ENCODE measurements at regions of chr10 and their contacts with region 1.

Region 1: DNA sequence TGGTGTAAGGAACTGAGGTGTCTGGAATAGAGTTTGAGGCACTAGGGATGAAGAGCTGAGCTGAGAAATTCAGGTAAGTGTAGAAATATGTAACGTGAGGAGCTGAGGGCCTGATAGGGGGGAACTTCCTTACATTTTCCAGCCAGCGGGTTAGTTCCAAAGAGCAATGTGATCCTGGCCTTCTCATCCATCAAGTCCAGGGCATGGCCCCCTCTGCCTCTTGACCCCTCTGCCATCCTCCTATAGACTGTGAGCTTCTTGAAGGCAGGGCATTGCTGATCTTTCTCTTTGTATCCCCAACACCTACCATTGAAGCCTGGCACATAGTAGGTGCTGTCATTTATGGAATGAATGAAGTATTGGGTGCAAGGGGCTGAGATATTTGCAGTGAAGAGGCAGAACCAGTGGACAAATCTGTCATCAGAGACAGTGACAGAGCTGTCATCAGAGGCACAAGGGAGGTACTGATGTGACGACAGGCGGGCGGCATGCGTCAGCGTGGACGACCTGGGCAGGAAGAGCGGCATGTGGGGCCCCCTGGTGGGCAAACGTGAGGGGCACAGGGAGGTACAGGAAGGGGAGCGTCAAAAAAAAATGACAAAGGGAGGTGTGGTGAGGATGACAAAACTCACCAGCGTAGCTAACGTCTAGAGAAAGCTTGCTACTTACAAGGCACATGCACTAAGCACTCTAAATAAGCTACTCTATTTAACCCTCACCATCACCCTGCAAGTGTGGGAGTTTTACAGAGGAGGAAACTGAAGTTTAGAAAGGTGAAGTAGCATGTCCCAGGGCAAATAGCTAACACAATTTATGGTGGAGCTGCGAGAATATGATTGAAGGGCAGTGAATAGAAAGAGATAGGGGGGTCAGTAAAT is 5.2 kb upstream of the CAMK2G start:
- DNase-seq: no peak
- ATAC-seq: peak; percentile 94
- H3K4me3 ChIP-seq: no peak overlapping the region
- H3K27ac ChIP-seq: no peak overlapping the region
- H3K4me1 ChIP-seq: peaks cover 11% of the 10 kb centered on the region
- H3K27me3 ChIP-seq: no peaks in the 10 kb centered on the region
- CTCF ChIP-seq: peak; percentile 95 to 99 (median 97)
- EP300 ChIP-seq: peak in 1 of 2 experiments; percentile 48; a peak in 2 of 4 replicates
- POLR2A ChIP-seq: no peak
- RAD21 ChIP-seq: peak; percentile 91

Region 2: GRCh38 chr10:73159038-73159648 is 720.4 kb before region 1 on chr10:
- CTCF ChIA-PET with region 1: no interaction called
- POLR2A ChIA-PET with region 1: no interaction called
- RAD21 ChIA-PET with region 1: no interaction called
- SMC1A ChIA-PET with region 1: no interaction called
- in situ Hi-C with region 1: no loop called
- intact Hi-C with region 1: no loop called
- DNase-seq: peak; percentile 30
- ATAC-seq: peak; percentile 53; the same call in 2 of the 3 replicates
- H3K4me3 ChIP-seq: no peak overlapping the region
- H3K27ac ChIP-seq: no peak overlapping the region
- H3K4me1 ChIP-seq: no peaks in the 10 kb centered on the region
- H3K27me3 ChIP-seq: no peaks in the 10 kb centered on the region
- CTCF ChIP-seq: peak; percentile 62 to 81 (median 64)
- EP300 ChIP-seq: no peak
- POLR2A ChIP-seq: no peak
- RAD21 ChIP-seq: peak; percentile 73

Region 3: GRCh38 chr10:73232887-73233286 is 646.6 kb before region 1 on chr10:
- CTCF ChIA-PET with region 1: no interaction called
- POLR2A ChIA-PET with region 1: no interaction called
- RAD21 ChIA-PET with region 1: no interaction called
- SMC1A ChIA-PET with region 1: no interaction called
- in situ Hi-C with region 1: no loop called
- intact Hi-C with region 1: no loop called
- DNase-seq: no peak
- ATAC-seq: no peak
- H3K4me3 ChIP-seq: no peak overlapping the region
- H3K27ac ChIP-seq: no peak overlapping the region
- H3K4me1 ChIP-seq: no peaks in the 10 kb centered on the region
- H3K27me3 ChIP-seq: no peaks in the 10 kb centered on the region
- CTCF ChIP-seq: peak in 2 of 3 experiments; percentile 5 to 24; a peak in 1 of 6 replicates
- EP300 ChIP-seq: no peak
- POLR2A ChIP-seq: no peak
- RAD21 ChIP-seq: peak; percentile 28

Region 4: GRCh38 chr10:73332221-73332778 is 547.2 kb before region 1 on chr10:
- CTCF ChIA-PET with region 1: no interaction called
- POLR2A ChIA-PET with region 1: no interaction called
- RAD21 ChIA-PET with region 1: no interaction called
- SMC1A ChIA-PET with region 1: no interaction called
- in situ Hi-C with region 1: no loop called
- intact Hi-C with region 1: no loop called
- DNase-seq: no peak
- ATAC-seq: no peak
- H3K4me3 ChIP-seq: no peak overlapping the region
- H3K27ac ChIP-seq: no peak overlapping the region
- H3K4me1 ChIP-seq: no peaks in the 10 kb centered on the region
- H3K27me3 ChIP-seq: no peaks in the 10 kb centered on the region
- CTCF ChIP-seq: no peak
- EP300 ChIP-seq: no peak
- POLR2A ChIP-seq: no peak
- RAD21 ChIP-seq: no peak

Region 5: DNA sequence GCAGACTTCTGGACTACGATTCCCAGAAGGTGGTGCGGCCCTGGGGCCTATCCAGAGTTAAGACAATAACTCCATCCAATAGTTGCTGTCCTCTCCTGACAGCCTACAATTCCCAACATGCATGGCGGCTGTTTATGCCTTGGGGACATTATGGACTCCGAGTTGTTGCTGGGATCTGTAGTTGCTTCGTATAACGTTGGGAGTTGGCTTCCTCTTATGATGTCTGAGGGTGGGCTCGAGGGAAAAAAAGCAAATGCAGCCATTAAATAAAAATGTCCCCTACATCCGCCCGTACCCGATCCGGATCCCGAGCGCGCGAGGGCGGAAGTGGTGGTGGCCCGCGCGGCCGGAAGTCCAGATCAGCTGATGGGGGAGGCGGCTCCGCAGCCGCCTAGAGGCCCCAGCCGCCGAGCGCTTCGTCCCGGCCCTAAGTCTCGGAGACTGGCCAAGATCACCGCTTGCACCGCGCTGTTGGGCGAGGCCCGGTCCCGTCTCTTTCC is 94.3 kb before region 1 on chr10 and contains the start of gene ZSWIM8:
- CTCF ChIA-PET with region 1: interaction called, 6 read pairs
- POLR2A ChIA-PET with region 1: interaction called, 3 read pairs
- RAD21 ChIA-PET with region 1: interaction called, 10 read pairs
- SMC1A ChIA-PET with region 1: interaction called, 4 read pairs
- in situ Hi-C with region 1: no loop called
- intact Hi-C with region 1: no loop called
- DNase-seq: peak; percentile 84
- ATAC-seq: peak; percentile 89
- H3K4me3 ChIP-seq: peak within 1 kb of the TSS; percentile 91
- H3K27ac ChIP-seq: peak within 1 kb of the TSS; percentile 85
- H3K4me1 ChIP-seq: peaks cover 10% of the 10 kb centered on the region
- H3K27me3 ChIP-seq: no peaks in the 10 kb centered on the region
- CTCF ChIP-seq: no peak
- EP300 ChIP-seq: no peak
- POLR2A ChIP-seq: peak; percentile 86
- RAD21 ChIP-seq: no peak
- polyA plus RNA-seq, gene ZSWIM8: 7.8 to 8.5 TPM

Region 6: GRCh38 chr10:73857446-73857845 is 22.1 kb before region 1 on chr10:
- CTCF ChIA-PET with region 1: interaction called, 440 read pairs
- POLR2A ChIA-PET with region 1: interaction called, 17 read pairs
- RAD21 ChIA-PET with region 1: interaction called, 299 read pairs
- SMC1A ChIA-PET with region 1: interaction called, 270 read pairs
- in situ Hi-C with region 1: no loop called
- intact Hi-C with region 1: no loop called
- DNase-seq: peak; percentile 43
- ATAC-seq: peak; percentile 82
- H3K4me3 ChIP-seq: peak overlapping the region; percentile 21; the same call in 1 of the 2 replicates
- H3K27ac ChIP-seq: peak overlapping the region; percentile 56; the same call in 1 of the 2 replicates
- H3K4me1 ChIP-seq: peaks cover 43% of the 10 kb centered on the region
- H3K27me3 ChIP-seq: no peaks in the 10 kb centered on the region
- CTCF ChIP-seq: no peak
- EP300 ChIP-seq: peak; percentile 15 to 48; a peak in 1 of 4 replicates
- POLR2A ChIP-seq: peak; percentile 30; the same call in 1 of the 2 replicates
- RAD21 ChIP-seq: no peak

Region 7: GRCh38 chr10:73908853-73909538 is 29.5 kb after region 1 on chr10:
- CTCF ChIA-PET with region 1: interaction called, 12 read pairs
- POLR2A ChIA-PET with region 1: interaction called, 5 read pairs
- RAD21 ChIA-PET with region 1: interaction called, 4 read pairs
- SMC1A ChIA-PET with region 1: interaction called, 1,048 read pairs
- in situ Hi-C with region 1: no loop called
- intact Hi-C with region 1: no loop called
- DNase-seq: peak; percentile 63
- ATAC-seq: peak; percentile 70
- H3K4me3 ChIP-seq: no peak overlapping the region
- H3K27ac ChIP-seq: no peak overlapping the region
- H3K4me1 ChIP-seq: peaks cover 18% of the 10 kb centered on the region
- H3K27me3 ChIP-seq: peaks cover 0 to 7% of the 10 kb centered on the region in 2 experiments; a peak in 3 of 4 replicates
- CTCF ChIP-seq: no peak
- EP300 ChIP-seq: peak; percentile 21 to 37; a peak in 1 of 4 replicates
- POLR2A ChIP-seq: no peak
- RAD21 ChIP-seq: no peak

Region 8: GRCh38 chr10:74081192-74081803 is 201.8 kb after region 1 on chr10:
- CTCF ChIA-PET with region 1: interaction called, 35 read pairs
- POLR2A ChIA-PET with region 1: no interaction called
- RAD21 ChIA-PET with region 1: interaction called, 22 read pairs
- SMC1A ChIA-PET with region 1: interaction called, 32 read pairs
- in situ Hi-C with region 1: loop called (anchors 25 kb)
- intact Hi-C with region 1: no loop called
- DNase-seq: no peak
- ATAC-seq: peak; percentile 37; the same call in 2 of the 3 replicates
- H3K4me3 ChIP-seq: no peak overlapping the region
- H3K27ac ChIP-seq: no peak overlapping the region
- H3K4me1 ChIP-seq: peaks cover 36% of the 10 kb centered on the region
- H3K27me3 ChIP-seq: no peaks in the 10 kb centered on the region
- CTCF ChIP-seq: peak; percentile 70 to 77 (median 71)
- EP300 ChIP-seq: no peak
- POLR2A ChIP-seq: no peak
- RAD21 ChIP-seq: peak; percentile 83

Region 9: DNA sequence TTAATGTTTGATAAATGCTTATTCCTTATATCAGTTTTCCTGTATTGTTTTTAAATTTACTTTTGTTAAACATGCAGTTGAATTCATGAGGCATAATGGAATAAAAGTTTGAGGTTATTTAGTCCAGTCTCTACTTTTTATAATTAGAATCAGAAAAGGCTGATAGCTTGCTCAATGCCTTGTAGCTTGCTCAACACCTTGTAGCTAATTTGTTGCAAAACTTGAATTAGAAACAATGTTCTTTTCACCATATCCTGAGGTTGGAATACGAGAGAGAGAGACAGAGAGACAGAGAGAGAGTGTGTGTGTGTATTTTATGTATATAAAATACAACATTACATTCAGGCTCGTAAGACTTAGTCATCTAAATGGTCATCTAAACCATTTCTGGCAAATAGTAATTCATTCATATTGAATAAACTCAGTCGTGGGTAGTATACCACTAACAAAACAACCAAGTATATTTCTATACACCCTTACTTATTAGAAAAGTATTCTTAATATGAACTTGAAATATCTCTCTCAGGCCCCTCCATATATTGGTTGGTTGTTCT is 515.0 kb after region 1 on chr10:
- CTCF ChIA-PET with region 1: no interaction called
- POLR2A ChIA-PET with region 1: no interaction called
- RAD21 ChIA-PET with region 1: no interaction called
- SMC1A ChIA-PET with region 1: no interaction called
- in situ Hi-C with region 1: no loop called
- intact Hi-C with region 1: no loop called
- DNase-seq: no peak
- ATAC-seq: no peak
- H3K4me3 ChIP-seq: no peak overlapping the region
- H3K27ac ChIP-seq: no peak overlapping the region
- H3K4me1 ChIP-seq: no peaks in the 10 kb centered on the region
- H3K27me3 ChIP-seq: no peaks in the 10 kb centered on the region
- CTCF ChIP-seq: no peak
- EP300 ChIP-seq: no peak
- POLR2A ChIP-seq: no peak
- RAD21 ChIP-seq: no peak